Activated T-helper 1 cell treated with anti-CD3 and anti-CD28 coated beads, Interleukin-12 subunit alpha, Interleukin-12 subunit beta, Interleukin-2, Interleukin-4 antibody, amounts not matched to agents 30 ng/mL and 10 ng/mL and 1 ng/mL, durations not matched to agents 14 hours and 24 hours and 36 hours (primary cell): ENCODE measurements at regions of chr19 and their contacts with region 1.

Region 1: GRCh38 chr19:12346896-12347295 is 13.5 kb upstream of the ZNF563 start:
- DNase-seq: no peak
- H3K4me3 Mint-ChIP-seq: no peak overlapping the region
- H3K27ac Mint-ChIP-seq: no peak overlapping the region
- H3K4me1 Mint-ChIP-seq: no peaks in the 10 kb centered on the region
- H3K27me3 Mint-ChIP-seq: no peaks in the 10 kb centered on the region

Region 2: GRCh38 chr19:12202250-12202649 is 144.6 kb before region 1 on chr19:
- intact Hi-C with region 1: loop called (anchors 2 kb)
- DNase-seq: peak; percentile 13
- H3K4me3 Mint-ChIP-seq: no peak overlapping the region
- H3K27ac Mint-ChIP-seq: no peak overlapping the region
- H3K4me1 Mint-ChIP-seq: no peaks in the 10 kb centered on the region
- H3K27me3 Mint-ChIP-seq: no peaks in the 10 kb centered on the region

Region 3: GRCh38 chr19:12331211-12331941 is 15.5 kb before region 1 on chr19:
- intact Hi-C with region 1: no loop called
- DNase-seq: peak; percentile 21
- H3K4me3 Mint-ChIP-seq: peak overlapping the region; percentile 96
- H3K27ac Mint-ChIP-seq: peak overlapping the region; percentile 37
- H3K4me1 Mint-ChIP-seq: peaks cover 38% of the 10 kb centered on the region
- H3K27me3 Mint-ChIP-seq: no peaks in the 10 kb centered on the region

Region 4: DNA sequence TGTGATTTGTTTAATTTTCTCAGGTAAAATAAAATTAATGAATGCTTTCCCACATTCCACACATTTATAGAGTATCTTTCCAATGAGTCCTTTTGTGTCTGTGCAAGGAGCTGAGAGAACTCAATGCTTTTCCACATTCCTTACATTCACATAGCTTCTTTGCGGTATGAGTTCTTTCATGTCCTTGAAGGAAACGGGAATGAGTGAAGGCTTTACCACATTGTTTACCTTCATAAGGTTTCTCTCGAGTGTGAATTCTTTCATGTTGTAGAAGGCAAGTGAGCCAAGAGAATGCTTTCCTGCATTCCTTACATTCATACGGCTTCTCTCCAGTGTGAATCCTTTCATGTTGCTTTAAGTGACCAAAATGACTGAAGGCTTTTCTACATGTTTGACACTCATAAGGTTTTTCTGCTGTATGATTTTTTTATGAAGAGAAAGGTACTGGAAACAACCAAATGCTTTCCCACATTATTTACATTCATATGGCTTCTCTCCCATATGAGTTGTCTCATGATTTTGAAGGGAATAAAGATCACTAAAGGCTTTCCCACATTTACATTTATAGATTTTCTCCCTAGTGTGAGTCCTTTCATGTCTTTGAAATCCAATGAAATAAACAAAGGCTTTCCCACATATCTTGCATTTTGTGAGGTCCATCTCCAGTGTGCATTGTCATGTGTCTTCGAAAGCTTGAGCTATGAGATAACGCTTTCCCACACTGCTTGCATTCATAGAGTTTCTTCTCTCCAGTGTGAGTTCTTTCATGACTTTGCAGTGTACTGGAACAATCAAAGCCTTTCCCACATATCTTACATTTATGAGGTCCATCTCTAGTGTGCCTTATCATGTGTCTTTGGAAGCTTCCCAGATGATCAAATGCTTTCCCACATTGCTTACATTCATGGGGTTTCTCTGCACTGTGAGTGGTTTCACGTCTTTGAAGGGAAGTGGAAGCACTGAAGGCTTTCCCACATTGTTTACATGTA is 33.1 kb after region 1 on chr19:
- intact Hi-C with region 1: no loop called
- DNase-seq: no peak
- H3K4me3 Mint-ChIP-seq: no peak overlapping the region
- H3K27ac Mint-ChIP-seq: no peak overlapping the region
- H3K4me1 Mint-ChIP-seq: no peaks in the 10 kb centered on the region
- H3K27me3 Mint-ChIP-seq: no peaks in the 10 kb centered on the region